Endothelial cell of umbilical vein (primary cell): ENCODE measurements at regions of chr1 and their contacts with region 1.

Region 1: DNA sequence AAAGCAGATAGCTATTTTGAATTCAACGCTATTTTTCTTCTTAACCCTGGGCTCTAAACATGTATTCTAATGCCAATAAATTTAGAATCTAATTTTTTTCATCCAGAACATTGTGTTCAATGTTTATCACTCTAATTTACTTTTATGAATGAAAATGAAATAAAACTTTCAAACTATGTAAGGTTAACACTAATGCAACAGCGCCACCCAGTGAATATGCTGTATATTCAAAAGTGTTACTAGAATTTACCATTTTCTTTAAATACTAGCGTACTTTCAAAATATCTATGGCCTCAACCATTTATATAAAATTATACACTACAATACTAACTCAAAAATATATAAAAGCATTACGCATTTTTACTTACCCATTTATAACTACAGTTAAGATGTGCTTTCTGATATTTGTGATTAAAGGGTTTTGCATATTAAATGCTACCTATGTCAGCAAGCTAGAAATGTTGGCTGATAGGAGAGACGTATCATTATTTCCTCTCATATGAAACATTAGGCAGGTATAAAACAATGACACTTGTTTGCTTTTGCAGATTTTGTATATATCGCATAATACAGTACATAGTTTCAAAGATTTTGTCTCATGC is 5.9 kb upstream of the NUF2 start:
- DNase-seq: peak; percentile 63
- H3K4me3 ChIP-seq: no peak overlapping the region
- H3K27ac ChIP-seq: no peak overlapping the region
- H3K4me1 ChIP-seq: peaks cover 6% of the 10 kb centered on the region
- H3K27me3 ChIP-seq: no peaks in the 10 kb centered on the region
- CTCF ChIP-seq: peak; percentile 15 to 28
- POLR2A ChIP-seq: no peak

Region 2: GRCh38 chr1:162822391-162823200 is 493.3 kb before region 1 on chr1:
- CTCF ChIA-PET with region 1: interaction called, 13 read pairs
- POLR2A ChIA-PET with region 1: no interaction called
- dilution Hi-C with region 1: no loop called
- intact Hi-C with region 1: no loop called
- DNase-seq: peak; percentile 25
- H3K4me3 ChIP-seq: peak overlapping the region; percentile 13 to 42 (median 41)
- H3K27ac ChIP-seq: no peak overlapping the region
- H3K4me1 ChIP-seq: peaks cover 16% of the 10 kb centered on the region
- H3K27me3 ChIP-seq: no peaks in the 10 kb centered on the region
- CTCF ChIP-seq: peak in 1 of 2 donors; percentile 2
- POLR2A ChIP-seq: no peak

Region 3: DNA sequence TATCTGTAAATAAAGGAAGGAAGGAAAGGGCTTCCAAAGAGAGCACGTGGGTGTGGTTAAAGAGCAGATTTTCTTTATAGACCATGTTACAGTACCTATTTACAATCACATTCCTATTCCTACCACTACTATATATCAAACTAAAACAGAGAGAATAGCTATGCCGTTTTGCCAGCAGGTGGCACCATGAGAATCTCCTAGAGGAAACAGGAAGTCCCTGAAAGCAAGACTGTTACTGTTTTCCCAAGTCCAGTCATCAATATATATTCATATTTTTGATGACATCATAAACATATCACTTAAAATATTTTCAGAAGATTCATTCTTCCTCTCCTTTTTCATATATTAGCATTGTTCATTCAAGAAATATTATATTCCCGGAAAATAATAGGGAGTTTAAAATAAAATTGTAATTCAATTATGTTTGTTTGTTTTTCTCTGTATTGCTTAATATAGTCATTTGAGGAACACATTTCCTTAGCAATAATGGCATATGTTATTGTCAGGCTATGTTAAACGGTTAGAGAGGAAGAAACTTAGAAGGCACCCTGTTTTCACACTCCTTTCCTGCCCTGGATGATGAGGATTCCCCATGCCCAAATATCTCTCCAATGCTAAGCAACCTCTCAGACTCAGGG is 461.5 kb before region 1 on chr1:
- CTCF ChIA-PET with region 1: interaction called, 129 read pairs
- POLR2A ChIA-PET with region 1: no interaction called
- dilution Hi-C with region 1: no loop called
- intact Hi-C with region 1: loop called (anchors 1 kb)
- DNase-seq: peak; percentile 82
- H3K4me3 ChIP-seq: peak overlapping the region in 1 of 3 experiments; percentile 4
- H3K27ac ChIP-seq: peak overlapping the region; percentile 93
- H3K4me1 ChIP-seq: peaks cover 57% of the 10 kb centered on the region
- H3K27me3 ChIP-seq: no peaks in the 10 kb centered on the region
- CTCF ChIP-seq: peak; percentile 63 to 68
- POLR2A ChIP-seq: peak; percentile 7

Region 4: GRCh38 chr1:163174524-163175437 is 141.1 kb before region 1 on chr1:
- CTCF ChIA-PET with region 1: interaction called, 65 read pairs
- POLR2A ChIA-PET with region 1: no interaction called
- dilution Hi-C with region 1: no loop called
- intact Hi-C with region 1: loop called (anchors 1 kb)
- DNase-seq: peak; percentile 77
- H3K4me3 ChIP-seq: no peak overlapping the region
- H3K27ac ChIP-seq: no peak overlapping the region
- H3K4me1 ChIP-seq: peaks cover 54% of the 10 kb centered on the region
- H3K27me3 ChIP-seq: no peaks in the 10 kb centered on the region
- CTCF ChIP-seq: peak; percentile 77 to 90
- POLR2A ChIP-seq: no peak

Region 5: GRCh38 chr1:163202833-163203451 is 112.9 kb before region 1 on chr1 and contains the start of gene RGS5:
- CTCF ChIA-PET with region 1: interaction called, 11 read pairs
- POLR2A ChIA-PET with region 1: no interaction called
- dilution Hi-C with region 1: no loop called
- intact Hi-C with region 1: loop called (anchors 2 kb)
- DNase-seq: peak; percentile 78
- H3K4me3 ChIP-seq: peak within 1 kb of the TSS; percentile 25 to 98 (median 92)
- H3K27ac ChIP-seq: peak within 1 kb of the TSS; percentile 77
- H3K4me1 ChIP-seq: peaks cover 41% of the 10 kb centered on the region
- H3K27me3 ChIP-seq: no peaks in the 10 kb centered on the region
- CTCF ChIP-seq: no peak
- POLR2A ChIP-seq: peak; percentile 67
- total RNA-seq, gene RGS5: 770 and 1,035 TPM in 2 replicates